B cell (primary cell): ENCODE measurements at regions of chr7 and their contacts with region 1.

Region 1: GRCh38 chr7:44885394-44886317 is at the start of gene PURB:
- DNase-seq: peak; percentile 99
- ATAC-seq: peak; percentile 83
- H3K4me3 ChIP-seq: peak within 1 kb of the TSS; percentile 78 to 83 (median 81)
- H3K4me3 Mint-ChIP-seq: peak within 1 kb of the TSS; percentile 96
- H3K27ac ChIP-seq: peak within 1 kb of the TSS; percentile 96 to 99
- H3K27ac Mint-ChIP-seq: peak within 1 kb of the TSS; percentile 100
- H3K4me1 ChIP-seq: peaks cover 41 to 49% of the 10 kb centered on the region in 2 donors
- H3K4me1 Mint-ChIP-seq: peaks cover 47% of the 10 kb centered on the region
- H3K27me3 ChIP-seq: no peaks in the 10 kb centered on the region
- H3K27me3 Mint-ChIP-seq: no peaks in the 10 kb centered on the region
- CTCF ChIP-seq: no peak
- total RNA-seq, gene PURB: 28.6 and 29.1 TPM in 2 replicates

Region 2: DNA sequence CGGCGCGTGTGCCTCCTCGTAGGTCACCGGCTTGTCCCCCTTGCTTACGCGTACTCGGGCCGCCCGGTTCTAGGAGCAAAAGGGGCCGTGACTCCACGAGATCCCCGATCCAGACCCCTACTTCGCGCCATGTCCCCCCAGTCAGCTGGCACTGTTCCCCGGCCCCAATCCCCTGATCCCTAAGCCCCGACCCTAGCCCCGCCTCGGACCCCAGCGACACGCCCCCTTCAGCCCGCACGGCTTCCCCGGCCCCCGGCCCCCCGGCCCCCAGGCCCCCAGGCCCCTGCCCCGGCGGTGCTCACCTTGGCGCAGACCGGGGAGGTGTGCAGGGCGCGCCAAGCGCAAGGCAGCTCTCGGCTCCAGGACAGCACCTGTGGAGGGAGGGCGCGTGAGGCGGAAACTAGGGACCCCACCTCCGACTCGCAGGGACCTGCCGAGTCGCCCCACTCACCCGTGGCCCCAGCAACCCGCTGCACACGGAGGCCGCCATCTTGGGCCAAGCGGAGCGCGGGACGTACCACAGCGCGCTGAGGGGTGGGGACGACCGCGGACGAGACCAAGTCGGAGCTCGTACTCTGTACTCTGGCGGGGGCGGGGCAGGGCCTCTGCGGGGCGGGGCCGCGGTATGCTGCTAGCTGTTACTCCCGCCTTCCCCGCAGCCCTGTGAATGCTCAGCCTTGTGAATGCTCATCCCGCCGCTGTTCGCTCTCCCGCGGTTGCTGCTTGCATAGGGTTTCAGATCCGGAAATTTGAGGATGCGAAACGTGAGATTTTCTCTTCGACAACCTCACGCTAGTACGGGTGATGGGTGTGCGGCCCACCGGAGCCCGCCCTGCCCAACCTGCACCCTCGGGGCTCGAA is 1016.4 kb before region 1 on chr7 and contains the start of gene MRPS24:
- CTCF ChIA-PET with region 1: no interaction called
- POLR2A ChIA-PET with region 1: interaction called, 10 read pairs
- intact Hi-C with region 1: no loop called
- DNase-seq: peak; percentile 95
- ATAC-seq: peak; percentile 100
- H3K4me3 ChIP-seq: peak within 1 kb of the TSS; percentile 17 to 91 (median 70)
- H3K4me3 Mint-ChIP-seq: peak within 1 kb of the TSS; percentile 91
- H3K27ac ChIP-seq: peak within 1 kb of the TSS; percentile 46 to 63
- H3K27ac Mint-ChIP-seq: peak within 1 kb of the TSS; percentile 84
- H3K4me1 ChIP-seq: peaks cover 15 to 19% of the 10 kb centered on the region in 2 donors
- H3K4me1 Mint-ChIP-seq: peaks cover 22% of the 10 kb centered on the region
- H3K27me3 ChIP-seq: no peaks in the 10 kb centered on the region
- H3K27me3 Mint-ChIP-seq: no peaks in the 10 kb centered on the region
- CTCF ChIP-seq: no peak
- total RNA-seq, gene MRPS24: 44.3 and 54.1 TPM in 2 replicates

Region 3: DNA sequence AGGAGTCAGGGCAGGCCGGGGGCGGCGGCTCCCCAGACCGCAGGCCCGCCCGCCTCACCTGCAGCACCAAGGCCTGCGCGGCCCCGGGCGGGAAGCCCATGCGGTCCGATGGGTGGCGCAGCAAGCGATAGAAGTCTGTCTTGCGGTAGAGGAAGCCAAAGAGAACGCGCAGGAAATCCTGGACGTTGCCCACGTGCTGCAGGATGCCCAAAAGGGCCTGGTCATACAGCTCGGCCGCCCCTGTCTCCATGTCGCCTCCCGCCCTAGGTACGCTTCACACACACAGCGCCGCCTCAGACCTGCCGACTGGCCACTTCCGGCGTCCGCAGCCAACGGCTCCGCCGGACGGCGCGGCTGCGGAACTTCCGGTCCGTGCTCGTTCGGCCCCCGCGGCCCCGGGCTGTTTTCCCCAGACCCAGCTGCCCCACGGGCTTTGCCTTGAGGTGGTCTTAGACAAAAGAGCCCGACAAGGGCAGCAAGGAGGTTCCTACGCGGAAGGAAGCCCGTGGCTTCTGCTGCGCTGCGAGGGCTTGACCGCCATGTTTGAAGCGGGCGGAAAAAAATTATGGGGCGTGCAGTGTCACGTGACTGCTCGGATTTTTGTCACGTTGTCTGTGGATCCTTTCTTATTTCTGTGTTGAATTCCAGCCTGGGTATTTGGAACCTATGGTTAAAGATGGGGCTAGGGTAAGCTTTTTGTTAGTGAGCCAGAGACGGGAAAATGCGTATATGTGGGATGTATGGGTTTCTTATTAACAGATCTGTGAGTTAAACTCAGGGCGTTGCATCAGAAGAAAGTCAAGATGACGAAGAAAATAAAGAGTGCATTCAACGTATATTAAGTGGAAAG is 395.1 kb before region 1 on chr7 and contains the start of gene NUDCD3:
- CTCF ChIA-PET with region 1: no interaction called
- POLR2A ChIA-PET with region 1: no interaction called
- intact Hi-C with region 1: loop called (anchors 1 kb)
- DNase-seq: peak; percentile 91
- ATAC-seq: peak; percentile 84
- H3K4me3 ChIP-seq: peak within 1 kb of the TSS; percentile 89 to 98 (median 93)
- H3K4me3 Mint-ChIP-seq: peak within 1 kb of the TSS; percentile 91
- H3K27ac ChIP-seq: peak within 1 kb of the TSS; percentile 93 to 94
- H3K27ac Mint-ChIP-seq: peak within 1 kb of the TSS; percentile 93
- H3K4me1 ChIP-seq: peaks cover 19 to 28% of the 10 kb centered on the region in 2 donors
- H3K4me1 Mint-ChIP-seq: peaks cover 44% of the 10 kb centered on the region
- H3K27me3 ChIP-seq: peaks cover 0 to 6% (median 3%) of the 10 kb centered on the region in 4 experiments
- H3K27me3 Mint-ChIP-seq: peaks cover 8% of the 10 kb centered on the region
- CTCF ChIP-seq: peak; percentile 27
- total RNA-seq, gene NUDCD3: 101 and 120 TPM in 2 replicates

Region 4: GRCh38 chr7:44797329-44798251 is 88.1 kb before region 1 on chr7:
- CTCF ChIA-PET with region 1: no interaction called
- POLR2A ChIA-PET with region 1: interaction called, 3 read pairs
- intact Hi-C with region 1: loop called (anchors 1 kb)
- DNase-seq: peak; percentile 87
- ATAC-seq: peak; percentile 49
- H3K4me3 ChIP-seq: peak overlapping the region; percentile 77 to 98 (median 93)
- H3K4me3 Mint-ChIP-seq: peak overlapping the region; percentile 93
- H3K27ac ChIP-seq: peak overlapping the region; percentile 92 to 97
- H3K27ac Mint-ChIP-seq: peak overlapping the region; percentile 98
- H3K4me1 ChIP-seq: peaks cover 15 to 26% of the 10 kb centered on the region in 2 donors
- H3K4me1 Mint-ChIP-seq: peaks cover 40% of the 10 kb centered on the region
- H3K27me3 ChIP-seq: no peaks in the 10 kb centered on the region
- H3K27me3 Mint-ChIP-seq: no peaks in the 10 kb centered on the region
- CTCF ChIP-seq: peak; percentile 73

Region 5: GRCh38 chr7:44914992-44915607 is 29.4 kb after region 1 on chr7:
- CTCF ChIA-PET with region 1: interaction called, 6 read pairs
- POLR2A ChIA-PET with region 1: interaction called, 3 read pairs
- intact Hi-C with region 1: loop called (anchors 1 kb)
- DNase-seq: peak; percentile 85
- ATAC-seq: peak; percentile 91
- H3K4me3 ChIP-seq: no peak overlapping the region
- H3K4me3 Mint-ChIP-seq: peak overlapping the region; percentile 63
- H3K27ac ChIP-seq: peak overlapping the region in 1 of 2 donors; percentile 68
- H3K27ac Mint-ChIP-seq: peak overlapping the region; percentile 89
- H3K4me1 ChIP-seq: peaks cover 5 to 12% of the 10 kb centered on the region in 2 donors
- H3K4me1 Mint-ChIP-seq: peaks cover 12% of the 10 kb centered on the region
- H3K27me3 ChIP-seq: no peaks in the 10 kb centered on the region
- H3K27me3 Mint-ChIP-seq: no peaks in the 10 kb centered on the region
- CTCF ChIP-seq: no peak

Region 6: GRCh38 chr7:44980393-44981034 is 94.9 kb after region 1 on chr7:
- CTCF ChIA-PET with region 1: no interaction called
- POLR2A ChIA-PET with region 1: interaction called, 5 read pairs
- intact Hi-C with region 1: loop called (anchors 2 kb)
- DNase-seq: peak; percentile 88
- ATAC-seq: peak; percentile 46
- H3K4me3 ChIP-seq: peak overlapping the region in 2 of 5 experiments; percentile 1 to 90
- H3K4me3 Mint-ChIP-seq: peak overlapping the region; percentile 97
- H3K27ac ChIP-seq: peak overlapping the region; percentile 79 to 93
- H3K27ac Mint-ChIP-seq: peak overlapping the region; percentile 98
- H3K4me1 ChIP-seq: peaks cover 53 to 75% of the 10 kb centered on the region in 2 donors
- H3K4me1 Mint-ChIP-seq: peaks cover 86% of the 10 kb centered on the region
- H3K27me3 ChIP-seq: no peaks in the 10 kb centered on the region
- H3K27me3 Mint-ChIP-seq: no peaks in the 10 kb centered on the region
- CTCF ChIP-seq: no peak

Region 7: DNA sequence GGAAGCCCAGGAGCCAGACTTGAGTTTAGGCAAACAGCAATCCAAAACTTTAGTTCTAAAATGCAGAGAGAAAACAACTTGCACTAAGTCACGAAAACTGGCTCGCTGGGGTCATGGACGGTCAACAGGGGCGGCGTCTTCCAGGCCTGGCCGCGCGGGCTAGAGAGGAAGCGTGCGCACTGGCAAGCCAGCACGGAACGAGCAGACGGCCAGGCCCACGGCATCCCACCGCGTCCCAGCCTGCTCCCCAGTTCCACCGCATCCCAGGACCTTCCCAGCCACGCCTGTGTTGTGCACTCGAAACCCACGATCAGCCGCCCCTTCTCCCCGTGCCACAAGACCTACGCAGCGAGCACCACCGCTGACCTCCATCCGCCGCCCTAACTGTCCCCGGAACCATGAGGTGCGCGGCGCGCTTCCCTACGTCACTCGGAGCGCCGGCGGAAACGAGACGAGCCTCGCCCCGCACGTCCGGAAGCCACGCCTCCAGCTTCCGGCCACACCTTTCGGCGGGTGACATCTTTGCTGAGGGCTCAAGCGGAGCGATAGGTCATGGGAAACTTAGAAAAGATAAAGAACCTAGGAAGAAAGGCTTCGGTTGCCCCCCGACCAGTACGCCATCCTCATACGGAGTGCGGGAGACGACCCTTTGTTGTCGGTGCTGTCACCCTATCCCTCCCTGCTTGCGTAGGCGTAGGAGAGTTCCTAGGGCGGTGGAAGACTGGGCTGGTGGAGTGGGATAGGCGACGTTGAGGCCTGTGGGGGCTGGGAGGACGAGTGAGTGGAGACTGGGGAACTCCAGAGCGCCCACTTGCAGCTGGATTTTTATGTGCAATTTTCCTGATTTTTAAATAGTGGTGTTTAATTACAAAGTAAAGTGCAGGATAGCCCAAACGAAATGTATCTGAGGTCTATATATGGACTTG is 225.9 kb after region 1 on chr7 and contains the start of gene TBRG4:
- CTCF ChIA-PET with region 1: no interaction called
- POLR2A ChIA-PET with region 1: no interaction called
- intact Hi-C with region 1: loop called (anchors 1 kb)
- DNase-seq: peak; percentile 96
- ATAC-seq: peak; percentile 94
- H3K4me3 ChIP-seq: peak within 1 kb of the TSS; percentile 67 to 93 (median 72)
- H3K4me3 Mint-ChIP-seq: peak within 1 kb of the TSS; percentile 91
- H3K27ac ChIP-seq: peak within 1 kb of the TSS; percentile 91 to 98
- H3K27ac Mint-ChIP-seq: peak within 1 kb of the TSS; percentile 95
- H3K4me1 ChIP-seq: peaks cover 22 to 38% of the 10 kb centered on the region in 2 donors
- H3K4me1 Mint-ChIP-seq: peaks cover 40% of the 10 kb centered on the region
- H3K27me3 ChIP-seq: no peaks in the 10 kb centered on the region
- H3K27me3 Mint-ChIP-seq: no peaks in the 10 kb centered on the region
- CTCF ChIP-seq: no peak
- total RNA-seq, gene TBRG4: 111 and 116 TPM in 2 replicates